ENCODE measurements at regions of chr10 and their contacts with region 1.

Region 1: DNA sequence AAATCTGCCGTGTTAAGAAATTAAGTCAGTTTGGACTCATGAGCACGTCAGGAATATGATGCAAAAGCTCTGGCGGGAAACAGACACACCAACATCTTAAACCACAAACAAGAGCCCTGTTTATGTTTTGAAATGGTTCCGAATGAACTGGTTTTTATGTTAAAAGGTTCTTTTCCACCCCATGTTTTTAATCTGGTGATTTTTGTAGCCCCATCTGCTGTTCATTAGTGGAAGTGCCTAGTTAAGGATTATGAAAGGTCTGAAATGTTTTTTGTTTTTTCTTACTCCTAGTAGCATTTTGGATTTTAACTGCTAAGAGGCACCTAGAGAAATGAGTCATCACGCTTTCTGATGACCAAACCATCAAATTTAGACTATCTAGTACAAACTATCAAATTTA is 404.1 kb upstream of the MKI67 start:
- DNase-seq: no peak
- H3K4me3 ChIP-seq: no peak overlapping the region
- H3K27ac ChIP-seq: no peak overlapping the region
- H3K4me1 ChIP-seq: no peaks in the 10 kb centered on the region
- H3K27me3 ChIP-seq: peaks cover 0 to 13% of the 10 kb centered on the region in 2 donors
- CTCF ChIP-seq: peak in 1 of 3 donors; percentile 34
- POLR2A ChIP-seq: no peak

Region 2: DNA sequence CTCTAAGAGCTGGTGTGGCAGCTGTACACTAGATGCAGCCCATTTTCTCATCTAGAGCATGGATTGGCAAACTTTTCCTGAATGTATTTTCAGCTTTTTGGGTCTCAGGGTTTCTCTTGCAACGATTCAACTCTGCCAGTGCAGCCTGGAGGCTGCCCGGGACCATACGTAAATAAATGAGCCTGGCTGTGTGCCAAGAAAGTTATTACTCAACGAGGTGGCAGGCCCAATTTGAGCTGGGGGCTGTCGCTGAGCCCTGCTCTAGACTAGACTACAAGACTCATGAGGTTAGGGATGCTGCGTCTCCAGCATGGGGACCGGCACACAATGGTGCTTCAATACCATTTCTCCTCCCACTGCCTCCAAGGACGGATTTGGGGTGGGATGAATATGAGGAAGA is 1046.6 kb before region 1 on chr10:
- intact Hi-C with region 1: loop called (anchors 5 kb)
- DNase-seq: no peak
- H3K4me3 ChIP-seq: no peak overlapping the region
- H3K27ac ChIP-seq: no peak overlapping the region
- H3K4me1 ChIP-seq: no peaks in the 10 kb centered on the region
- H3K27me3 ChIP-seq: peaks cover 0 to 19% of the 10 kb centered on the region in 2 donors
- CTCF ChIP-seq: no peak
- POLR2A ChIP-seq: no peak

Region 3: GRCh38 chr10:128429835-128430513 is 100.3 kb before region 1 on chr10:
- intact Hi-C with region 1: no loop called
- DNase-seq: no peak
- H3K4me3 ChIP-seq: no peak overlapping the region
- H3K27ac ChIP-seq: no peak overlapping the region
- H3K4me1 ChIP-seq: no peaks in the 10 kb centered on the region
- H3K27me3 ChIP-seq: peaks cover 0 to 16% of the 10 kb centered on the region in 2 donors
- CTCF ChIP-seq: no peak
- POLR2A ChIP-seq: no peak

Region 4: GRCh38 chr10:128557149-128557710 is 26.9 kb after region 1 on chr10:
- intact Hi-C with region 1: no loop called
- DNase-seq: no peak
- H3K4me3 ChIP-seq: no peak overlapping the region
- H3K27ac ChIP-seq: no peak overlapping the region
- H3K4me1 ChIP-seq: no peaks in the 10 kb centered on the region
- H3K27me3 ChIP-seq: no peaks in the 10 kb centered on the region
- CTCF ChIP-seq: no peak
- POLR2A ChIP-seq: no peak

Region 5: DNA sequence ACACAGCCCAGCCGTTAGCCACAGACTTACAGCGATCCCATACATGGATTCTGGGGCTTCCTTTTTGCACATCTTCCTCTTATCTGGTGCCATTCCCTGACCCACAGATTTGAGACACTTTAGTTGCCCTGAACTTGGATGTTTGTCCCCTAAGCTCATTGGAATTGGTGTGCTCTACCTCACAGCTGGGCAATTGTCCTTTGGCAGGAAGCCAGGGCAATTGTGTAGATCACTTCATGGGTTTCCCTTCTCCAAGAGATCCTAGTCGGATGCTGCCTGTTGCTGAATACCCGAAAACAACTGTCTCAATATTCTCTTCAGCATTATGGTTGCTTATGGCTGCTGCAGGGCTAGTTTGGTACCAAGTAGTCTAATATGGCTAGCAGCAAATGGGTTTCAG is 66.6 kb after region 1 on chr10:
- intact Hi-C with region 1: loop called (anchors 2 kb)
- DNase-seq: no peak
- H3K4me3 ChIP-seq: no peak overlapping the region
- H3K27ac ChIP-seq: no peak overlapping the region
- H3K4me1 ChIP-seq: no peaks in the 10 kb centered on the region
- H3K27me3 ChIP-seq: no peaks in the 10 kb centered on the region
- CTCF ChIP-seq: no peak
- POLR2A ChIP-seq: no peak

Measured in breast epithelium (tissue), 4 donors.